ENCODE measurements at regions of chr16 and their contacts with region 1.

Region 1: DNA sequence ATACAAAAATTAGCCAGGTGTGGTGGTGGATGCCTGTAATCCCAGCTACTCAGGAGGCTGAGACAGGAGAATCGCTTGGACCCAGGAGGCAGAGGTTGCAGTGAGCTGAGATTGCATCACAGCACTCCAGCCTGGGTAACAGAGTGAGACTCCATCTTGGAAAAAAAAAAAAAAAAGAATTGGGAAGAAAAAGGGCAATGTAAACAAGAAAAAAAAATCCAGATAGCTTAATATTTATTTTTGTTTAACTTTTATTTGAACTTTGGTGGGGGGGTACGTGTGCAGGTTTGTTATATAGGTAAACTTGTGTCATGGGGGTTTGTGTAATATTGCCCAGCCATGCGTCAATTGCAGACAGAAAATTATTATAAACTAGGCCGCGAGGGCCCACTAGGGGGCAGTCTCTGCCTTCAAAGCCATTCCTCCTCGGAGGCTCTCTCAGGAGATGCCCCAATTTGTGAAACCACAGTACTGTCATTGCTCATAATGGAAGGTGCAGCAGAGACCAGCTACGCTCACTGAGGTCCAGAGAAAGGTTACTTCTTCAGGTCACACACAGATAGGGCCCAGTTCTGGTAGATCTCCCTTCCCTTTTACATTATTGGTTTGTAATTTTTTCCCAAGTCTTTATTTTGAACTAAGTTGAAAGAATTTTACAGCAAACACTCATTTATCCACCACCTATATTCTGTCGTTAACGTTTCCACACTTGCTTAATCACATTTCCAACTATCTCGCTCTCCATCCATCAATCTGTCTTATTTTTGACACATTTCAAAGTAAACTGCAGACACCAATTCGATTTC is 206.2 kb downstream of the PRKCB start:
- DNase-seq: peak; percentile 53
- ATAC-seq: peak; percentile 41 to 70

Region 2: GRCh38 chr16:24499193-24499814 is 457.3 kb after region 1 on chr16:
- intact Hi-C with region 1: loop called in 1 of 2 experiments (anchors 1 kb)
- DNase-seq: no peak
- ATAC-seq: no peak

Measured in left cardiac atrium (tissue), 4 donors.